Left colon (tissue), 2 donors: ENCODE measurements at regions of chr11 and their contacts with region 1.

Region 1: DNA sequence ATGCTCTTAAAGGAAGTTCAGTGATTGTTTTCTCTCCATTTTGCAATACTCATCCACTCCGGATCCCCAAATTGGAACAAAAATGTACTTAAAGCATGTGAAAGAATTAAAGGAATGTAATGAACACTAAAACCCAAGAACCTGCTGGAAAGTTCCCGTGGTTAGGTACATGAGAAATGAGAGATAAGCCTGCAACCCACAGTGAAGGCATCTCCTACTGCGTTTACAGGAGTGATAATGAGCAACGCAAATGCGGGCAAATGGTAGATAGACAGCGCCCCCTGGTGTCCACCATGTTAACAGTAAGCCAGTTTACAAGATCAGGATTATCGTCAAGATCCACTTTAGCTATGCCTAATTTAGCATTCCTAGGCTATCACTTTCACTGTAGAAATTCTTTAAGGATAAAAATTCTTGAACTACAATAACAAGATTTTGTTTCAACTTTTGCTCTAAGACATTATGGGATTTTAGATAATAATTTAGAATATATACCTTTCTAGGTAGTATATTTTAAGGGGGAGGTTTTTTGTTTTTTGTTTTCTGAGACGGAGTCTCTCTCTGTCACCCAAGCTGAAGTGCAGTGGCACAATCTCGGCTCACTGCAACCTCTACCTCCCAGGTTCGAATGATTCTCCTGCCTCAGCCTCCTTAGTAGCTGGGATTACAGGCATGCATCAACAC is 29.9 kb downstream of the ALG9 start:
- DNase-seq: peak; percentile 75 to 95
- ATAC-seq: peak; percentile 92

Region 2: DNA sequence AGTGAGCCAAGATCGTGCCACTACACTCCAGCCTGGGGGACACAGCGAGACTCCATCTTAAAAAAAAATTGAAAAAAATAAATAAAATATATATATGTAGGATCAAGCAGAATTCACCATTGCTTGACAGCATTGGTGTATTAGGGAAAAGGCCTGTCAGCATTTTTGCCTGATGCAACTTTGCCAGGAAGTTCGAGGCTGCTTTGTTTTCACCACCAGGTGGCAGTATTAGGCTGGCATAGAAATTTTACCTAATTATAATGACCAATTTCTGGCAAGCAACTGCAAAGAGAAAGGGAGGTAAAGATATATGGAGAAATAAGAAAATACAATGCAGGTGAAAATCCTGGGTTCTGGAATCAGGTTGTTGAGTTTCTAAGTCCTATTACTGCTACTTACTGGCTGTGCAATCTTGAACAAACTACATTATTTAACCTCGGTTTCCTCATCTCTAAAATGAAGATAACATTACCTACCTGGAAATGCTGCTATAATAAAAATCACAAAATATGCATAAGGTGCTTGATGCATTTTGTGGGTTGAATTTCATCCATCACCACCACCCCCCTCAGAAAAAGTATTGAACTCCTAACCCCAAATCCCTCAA is 276.3 kb before region 1 on chr11:
- intact Hi-C with region 1: loop called (anchors 5 to 10 kb)
- DNase-seq: peak in 1 of 2 donors; percentile 60
- ATAC-seq: peak; percentile 50

Region 3: DNA sequence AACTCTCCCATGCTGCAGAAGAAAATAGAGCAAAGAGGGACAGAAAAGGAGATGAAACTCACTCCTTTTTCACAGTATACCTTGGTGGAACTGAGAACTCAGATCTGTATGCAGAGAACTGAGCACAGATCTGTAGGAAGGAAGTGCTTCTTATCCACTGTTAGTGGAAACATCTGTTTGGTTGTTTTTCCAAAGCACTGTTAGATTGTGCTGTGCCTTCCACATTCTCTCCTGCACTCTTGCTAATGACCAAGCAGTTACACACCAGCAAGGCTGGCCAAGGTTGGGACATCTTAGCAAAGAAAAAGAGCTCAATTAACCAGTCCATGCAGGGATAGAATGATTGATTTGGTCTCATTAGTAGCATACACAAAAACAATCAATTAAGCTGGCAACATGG is 259.3 kb before region 1 on chr11:
- intact Hi-C with region 1: loop called in 1 of 2 experiments (anchors 5 kb)
- DNase-seq: no peak
- ATAC-seq: no peak

Region 4: DNA sequence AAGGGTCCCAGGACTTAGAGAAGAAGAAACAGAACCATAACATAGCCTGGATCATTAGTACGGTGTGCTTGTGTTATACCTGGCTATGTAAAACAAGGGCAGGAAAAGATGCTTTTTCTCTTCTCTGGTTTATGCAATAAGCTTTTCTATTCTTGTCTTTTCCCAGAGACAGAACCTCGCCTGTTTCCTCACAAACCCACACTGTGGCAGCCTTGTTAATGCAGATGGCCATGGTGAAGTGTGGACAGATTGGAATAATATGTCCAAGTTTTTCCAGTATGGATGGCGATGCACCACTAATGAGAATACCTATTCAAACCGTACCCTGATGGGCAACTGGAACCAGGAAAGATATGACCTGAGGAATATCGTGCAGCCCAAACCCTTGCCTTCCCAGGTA is 40.7 kb after region 1 on chr11:
- intact Hi-C with region 1: no loop called
- DNase-seq: no peak
- ATAC-seq: no peak